ENCODE measurements at regions of chrX and their contacts with region 1.

Region 1: DNA sequence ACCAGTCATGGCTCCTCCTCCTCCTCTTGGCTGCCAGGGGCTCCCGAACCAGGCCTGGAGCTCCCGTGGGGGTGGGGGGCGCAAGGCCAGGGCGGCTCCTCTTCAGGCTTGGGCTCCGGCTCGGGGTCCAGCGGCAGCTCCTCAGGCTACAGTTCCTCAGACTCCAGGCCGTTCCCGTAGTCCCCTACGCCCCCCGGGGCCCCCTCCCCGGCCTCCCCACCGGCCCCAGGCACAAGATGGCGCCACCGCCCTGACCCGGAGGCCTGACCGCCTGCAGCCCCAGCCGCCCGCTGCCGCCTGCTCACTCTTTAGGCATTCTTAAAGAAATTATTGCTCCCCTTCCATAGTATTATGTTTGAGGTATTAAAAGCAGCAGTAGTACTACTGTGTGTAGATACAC is 54.5 kb downstream of the TAF1 start:
- DNase-seq: no peak
- ATAC-seq: no peak
- H3K4me3 ChIP-seq: no peak overlapping the region
- H3K4me3 Mint-ChIP-seq: no peak overlapping the region
- H3K27ac ChIP-seq: no peak overlapping the region
- H3K27ac Mint-ChIP-seq: no peak overlapping the region
- H3K4me1 ChIP-seq: no peaks in the 10 kb centered on the region
- H3K4me1 Mint-ChIP-seq: no peaks in the 10 kb centered on the region
- H3K27me3 ChIP-seq: no peaks in the 10 kb centered on the region
- H3K27me3 Mint-ChIP-seq: peaks cover 0 to 6% of the 10 kb centered on the region in 2 donors

Region 2: DNA sequence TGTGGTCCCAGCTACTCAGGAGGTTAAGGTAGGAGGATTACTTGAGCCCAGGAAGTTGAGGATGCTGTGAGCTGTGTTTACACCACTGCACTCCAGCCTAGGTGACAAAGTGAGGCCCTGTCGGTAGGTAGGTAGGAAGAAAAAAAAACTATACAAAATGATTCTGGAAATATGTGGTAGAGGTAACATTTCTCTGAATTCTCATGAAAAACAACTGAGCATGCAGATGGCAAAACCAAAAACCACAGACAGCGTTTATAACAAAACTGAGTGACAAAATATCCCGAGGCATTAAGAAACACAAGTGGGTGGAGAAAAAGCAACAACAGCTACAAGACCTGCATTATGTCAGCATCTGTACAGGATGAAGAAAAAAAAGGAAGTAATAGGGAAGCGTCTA is 764.4 kb before region 1 on chrX:
- CTCF ChIA-PET with region 1: no interaction called
- POLR2A ChIA-PET with region 1: no interaction called
- DNase-seq: no peak
- ATAC-seq: peak in 1 of 4 experiments; percentile 46
- H3K4me3 ChIP-seq: no peak overlapping the region
- H3K4me3 Mint-ChIP-seq: no peak overlapping the region
- H3K27ac ChIP-seq: no peak overlapping the region
- H3K27ac Mint-ChIP-seq: peak overlapping the region; percentile 77 to 85
- H3K4me1 ChIP-seq: no peaks in the 10 kb centered on the region
- H3K4me1 Mint-ChIP-seq: peaks cover 0 to 12% (median 10%) of the 10 kb centered on the region in 3 donors
- H3K27me3 ChIP-seq: no peaks in the 10 kb centered on the region
- H3K27me3 Mint-ChIP-seq: peaks cover 0 to 8% of the 10 kb centered on the region in 2 donors

Region 3: GRCh38 chrX:71439420-71439819 is 18.7 kb after region 1 on chrX:
- CTCF ChIA-PET with region 1: no interaction called
- POLR2A ChIA-PET with region 1: interaction called in 1 of 2 experiments, 12 read pairs
- DNase-seq: no peak
- ATAC-seq: no peak
- H3K4me3 ChIP-seq: no peak overlapping the region
- H3K4me3 Mint-ChIP-seq: no peak overlapping the region
- H3K27ac ChIP-seq: no peak overlapping the region
- H3K27ac Mint-ChIP-seq: peak overlapping the region in 1 of 2 donors; percentile 46
- H3K4me1 ChIP-seq: no peaks in the 10 kb centered on the region
- H3K4me1 Mint-ChIP-seq: peaks cover 3 to 12% (median 4%) of the 10 kb centered on the region in 3 donors
- H3K27me3 ChIP-seq: no peaks in the 10 kb centered on the region
- H3K27me3 Mint-ChIP-seq: no peaks in the 10 kb centered on the region